ENCODE measurements at regions of chr2 and their contacts with region 1.

Region 1: GRCh38 chr2:143193121-143193520 is 63.9 kb downstream of the ARHGAP15 start:
- DNase-seq: no peak
- ATAC-seq: no peak
- H3K4me3 ChIP-seq: no peak overlapping the region
- H3K4me3 Mint-ChIP-seq: peak overlapping the region in 2 of 10 donors; percentile 1 to 32
- H3K27ac ChIP-seq: no peak overlapping the region
- H3K27ac Mint-ChIP-seq: peak overlapping the region in 5 of 9 donors; percentile 14 to 81 (median 28)
- H3K4me1 ChIP-seq: no peaks in the 10 kb centered on the region
- H3K4me1 Mint-ChIP-seq: peaks cover 17 to 79% (median 71%) of the 10 kb centered on the region in 7 donors
- H3K27me3 ChIP-seq: no peaks in the 10 kb centered on the region
- H3K27me3 Mint-ChIP-seq: no peaks in the 10 kb centered on the region

Region 2: GRCh38 chr2:143177096-143177786 is 15.9 kb before region 1 on chr2:
- CTCF ChIA-PET with region 1: interaction called, 4 read pairs
- POLR2A ChIA-PET with region 1: interaction called, 7 read pairs
- intact Hi-C with region 1: loop called (anchors 2 kb)
- DNase-seq: peak in 2 of 9 donors; percentile 10 to 14
- ATAC-seq: peak; percentile 71
- H3K4me3 ChIP-seq: peak overlapping the region; percentile 44
- H3K4me3 Mint-ChIP-seq: peak overlapping the region; percentile 64 to 87 (median 82)
- H3K27ac ChIP-seq: peak overlapping the region; percentile 68
- H3K27ac Mint-ChIP-seq: peak overlapping the region; percentile 86 to 96 (median 92)
- H3K4me1 ChIP-seq: peaks cover 13% of the 10 kb centered on the region in 2 donors
- H3K4me1 Mint-ChIP-seq: peaks cover 28 to 82% (median 74%) of the 10 kb centered on the region in 7 donors
- H3K27me3 ChIP-seq: no peaks in the 10 kb centered on the region
- H3K27me3 Mint-ChIP-seq: no peaks in the 10 kb centered on the region